ENCODE measurements at regions of chr13 and their contacts with region 1.

Region 1: GRCh38 chr13:95624020-95624419 is 20.5 kb downstream of the DZIP1 start:
- DNase-seq: no peak
- H3K4me3 ChIP-seq: no peak overlapping the region
- H3K27ac ChIP-seq: no peak overlapping the region
- H3K4me1 ChIP-seq: no peaks in the 10 kb centered on the region
- H3K27me3 ChIP-seq: no peaks in the 10 kb centered on the region
- CTCF ChIP-seq: peak; percentile 64 to 69

Region 2: DNA sequence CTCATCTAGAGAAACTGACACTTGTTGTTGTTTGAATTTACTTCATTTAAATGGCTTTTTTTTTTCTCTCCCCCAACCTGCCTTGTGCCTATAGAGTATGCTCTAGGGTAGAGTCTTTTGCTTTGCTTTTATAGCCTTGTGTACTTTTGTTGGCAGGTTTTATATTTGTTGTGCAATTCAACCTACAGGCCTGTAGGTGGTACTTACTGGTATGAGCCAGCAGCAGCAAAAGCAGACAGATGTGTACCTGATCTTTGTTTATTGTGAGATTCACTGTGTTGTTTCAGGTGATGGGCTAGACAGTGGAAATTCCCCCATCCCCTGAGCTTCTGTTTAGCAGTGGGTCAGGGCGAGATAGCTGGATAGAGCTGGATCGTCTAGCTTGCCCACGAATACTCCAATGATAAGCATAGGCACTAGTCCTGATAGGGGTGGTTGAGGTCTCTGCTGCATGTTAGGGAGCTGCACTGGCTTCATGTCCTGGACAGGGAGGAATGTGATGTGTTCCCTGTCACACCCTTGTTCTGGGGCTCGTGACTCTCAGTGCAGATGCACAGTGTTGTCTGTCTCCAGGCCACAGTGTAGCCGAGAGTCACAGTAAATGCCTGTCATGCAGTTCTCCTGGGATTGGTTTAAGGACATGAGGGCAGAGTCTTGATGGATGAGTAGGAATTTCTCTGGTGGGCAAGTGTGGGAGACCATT is 74.2 kb after region 1 on chr13:
- intact Hi-C with region 1: no loop called
- DNase-seq: no peak
- H3K4me3 ChIP-seq: no peak overlapping the region
- H3K27ac ChIP-seq: no peak overlapping the region
- H3K4me1 ChIP-seq: peaks cover 0 to 11% (median 2%) of the 10 kb centered on the region in 4 donors
- H3K27me3 ChIP-seq: no peaks in the 10 kb centered on the region
- CTCF ChIP-seq: no peak

Region 3: GRCh38 chr13:95834134-95834765 is 210.2 kb after region 1 on chr13:
- intact Hi-C with region 1: loop called (anchors 5 kb)
- DNase-seq: peak; percentile 39 to 68
- H3K4me3 ChIP-seq: no peak overlapping the region
- H3K27ac ChIP-seq: no peak overlapping the region
- H3K4me1 ChIP-seq: no peaks in the 10 kb centered on the region
- H3K27me3 ChIP-seq: no peaks in the 10 kb centered on the region
- CTCF ChIP-seq: peak; percentile 86 to 90

Region 4: DNA sequence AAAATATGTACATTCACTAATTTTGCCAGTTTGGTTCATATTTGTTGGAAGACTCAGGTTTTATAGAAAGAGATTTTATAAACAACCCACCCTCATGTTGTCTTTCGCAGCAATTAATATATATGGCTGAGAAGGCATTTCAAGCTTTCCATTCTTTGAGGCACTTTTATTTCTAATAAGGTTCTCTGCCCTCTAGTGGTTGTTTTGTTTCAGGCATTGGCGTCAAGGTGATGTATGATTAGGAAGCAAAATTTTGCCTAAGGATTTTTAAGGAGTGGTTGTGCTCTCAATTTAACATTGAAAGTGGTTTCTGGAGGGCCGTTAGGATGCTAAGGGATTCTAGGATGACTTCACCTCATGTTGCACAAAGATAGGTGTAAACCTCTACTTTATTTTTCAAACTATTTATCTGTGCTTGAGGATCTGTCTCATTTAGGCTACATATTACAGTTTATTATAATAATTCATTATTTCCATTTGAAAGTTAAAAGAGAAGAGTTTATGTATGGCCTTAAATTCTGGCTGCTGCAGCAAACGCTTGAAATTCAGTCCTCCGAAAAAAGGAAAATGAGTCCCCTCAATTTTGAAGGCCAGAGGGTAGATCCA is 1334.4 kb after region 1 on chr13:
- intact Hi-C with region 1: no loop called
- DNase-seq: no peak
- H3K4me3 ChIP-seq: no peak overlapping the region
- H3K27ac ChIP-seq: no peak overlapping the region
- H3K4me1 ChIP-seq: peaks cover 0 to 5% (median 0%) of the 10 kb centered on the region in 4 donors
- H3K27me3 ChIP-seq: no peaks in the 10 kb centered on the region
- CTCF ChIP-seq: peak; percentile 68 to 72